GM10248 (cell line): ENCODE measurements at regions of chr13 and their contacts with region 1.

Region 1: GRCh38 chr13:77810430-77810829 is 108.2 kb downstream of the EDNRB start:
- DNase-seq: peak; percentile 21
- CTCF ChIP-seq: peak; percentile 45

Region 2: DNA sequence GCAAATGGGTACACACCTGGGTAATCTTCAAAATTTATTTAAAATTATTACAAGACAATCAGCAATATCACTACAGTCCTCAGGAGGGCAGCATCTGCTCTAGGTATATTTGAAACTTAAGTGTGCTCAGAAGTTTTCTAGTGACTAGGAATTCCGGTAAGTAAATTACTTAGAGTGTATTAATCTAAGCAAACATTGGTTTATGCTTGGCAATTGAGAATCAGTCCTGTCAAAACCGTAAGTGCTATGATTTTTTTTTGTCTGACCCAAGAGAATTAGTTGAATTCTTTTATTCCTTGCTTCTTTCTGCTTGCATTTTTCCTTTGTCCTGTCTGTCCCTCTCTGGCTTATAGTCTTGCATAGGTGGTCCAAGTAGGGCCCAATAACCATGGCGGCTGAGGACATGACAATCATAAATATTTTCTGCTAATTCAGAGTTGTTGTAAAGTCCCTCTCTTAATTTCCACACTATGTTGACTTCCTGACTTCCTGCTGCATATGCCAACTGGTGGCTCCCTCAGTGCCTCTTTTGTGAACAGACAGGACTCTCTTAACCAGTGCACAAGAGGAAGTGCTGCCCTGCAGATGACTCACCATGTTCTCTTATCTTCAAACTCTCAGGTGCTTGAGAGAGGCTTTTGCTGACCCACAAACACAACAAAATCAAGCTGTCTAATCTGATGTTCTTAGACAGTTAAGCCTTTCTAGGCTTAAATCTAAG is 30.7 kb before region 1 on chr13:
- CTCF ChIA-PET with region 1: interaction called, 16 read pairs
- POLR2A ChIA-PET with region 1: no interaction called
- DNase-seq: peak; percentile 38
- CTCF ChIP-seq: peak; percentile 41

Region 3: GRCh38 chr13:77800219-77800618 is 10.2 kb before region 1 on chr13:
- CTCF ChIA-PET with region 1: interaction called, 13 read pairs
- POLR2A ChIA-PET with region 1: no interaction called
- DNase-seq: no peak
- CTCF ChIP-seq: no peak